A673 (cell line): ENCODE measurements at regions of chr5 and their contacts with region 1.

Region 1: DNA sequence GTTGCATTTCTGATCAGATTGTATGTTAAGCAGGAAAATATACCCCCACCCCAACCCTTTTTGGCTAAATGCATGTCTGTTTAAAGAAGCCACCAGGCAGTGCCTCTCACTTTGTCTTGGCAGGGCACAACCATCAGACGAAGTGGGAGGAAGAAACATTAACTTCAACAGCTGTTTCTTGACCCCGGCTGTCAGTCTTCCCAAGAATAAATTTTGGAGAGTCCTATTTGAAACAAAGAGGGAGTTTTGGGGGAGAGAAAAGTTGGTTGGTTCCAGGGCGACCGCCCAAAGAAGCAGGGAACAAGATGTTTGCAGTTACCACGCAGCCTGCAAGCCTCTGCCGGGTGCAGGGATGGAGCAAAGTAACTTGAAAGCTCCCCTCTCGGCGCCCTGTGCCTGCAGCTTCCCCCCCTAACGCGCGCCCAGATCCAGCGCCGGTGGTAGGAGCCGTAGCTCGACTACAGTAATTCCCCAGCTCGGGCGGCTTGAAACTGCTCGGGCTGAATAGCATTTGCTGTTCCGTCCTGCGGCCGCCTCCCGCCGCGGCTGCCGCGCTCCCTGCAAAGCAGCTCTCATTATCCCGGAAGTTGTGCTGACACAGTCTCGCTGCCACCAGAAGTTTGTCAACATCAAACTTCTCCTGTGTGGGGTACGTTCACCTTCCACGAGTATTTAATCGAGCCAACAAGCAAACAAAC is 100.7 kb upstream of the SSBP2 start:
- DNase-seq: peak; percentile 98
- H3K4me3 ChIP-seq: peak overlapping the region; percentile 37
- H3K27ac ChIP-seq: peak overlapping the region; percentile 98
- H3K4me1 ChIP-seq: peaks cover 71% of the 10 kb centered on the region
- H3K27me3 ChIP-seq: no peaks in the 10 kb centered on the region
- CTCF ChIP-seq: no peak

Region 2: GRCh38 chr5:81425569-81425968 is 426.1 kb before region 1 on chr5:
- CTCF ChIA-PET with region 1: no interaction called
- POLR2A ChIA-PET with region 1: no interaction called
- intact Hi-C with region 1: loop called (anchors 1 kb)
- DNase-seq: peak; percentile 76
- H3K4me3 ChIP-seq: no peak overlapping the region
- H3K27ac ChIP-seq: no peak overlapping the region
- H3K4me1 ChIP-seq: peaks cover 14% of the 10 kb centered on the region
- H3K27me3 ChIP-seq: no peaks in the 10 kb centered on the region
- CTCF ChIP-seq: peak; percentile 69

Region 3: DNA sequence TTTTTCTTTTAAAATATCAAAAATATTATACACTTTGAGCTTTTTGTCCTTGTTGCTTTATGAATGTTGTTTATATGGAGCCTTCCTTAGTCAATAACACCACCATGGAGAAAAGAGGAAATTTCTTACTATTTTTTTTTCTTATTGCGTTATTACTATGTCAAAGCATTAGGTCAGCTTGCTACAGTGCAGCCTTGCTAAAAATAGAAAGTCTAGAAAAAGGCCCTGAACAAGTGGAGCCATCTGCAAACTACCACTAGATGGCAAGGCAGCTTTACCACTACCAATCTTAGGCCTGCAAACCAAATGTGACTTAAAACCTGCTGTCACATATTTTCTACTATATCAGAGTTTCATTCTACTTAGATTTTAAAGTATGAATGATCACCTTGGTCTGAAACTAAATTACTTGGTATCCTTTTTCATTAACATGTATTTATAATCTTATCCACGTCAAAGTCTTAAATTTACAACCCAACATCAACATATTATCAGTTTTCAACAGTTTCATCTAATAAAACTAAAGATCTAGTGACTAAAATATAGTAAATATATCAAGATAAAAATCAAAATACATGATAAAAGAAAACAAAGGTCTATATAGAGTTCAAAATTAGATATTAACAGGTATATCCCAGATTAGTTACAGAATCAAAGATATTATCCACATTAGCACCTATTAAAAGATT is 344.6 kb before region 1 on chr5:
- CTCF ChIA-PET with region 1: no interaction called
- POLR2A ChIA-PET with region 1: no interaction called
- intact Hi-C with region 1: loop called (anchors 2 kb)
- DNase-seq: peak; percentile 89
- H3K4me3 ChIP-seq: no peak overlapping the region
- H3K27ac ChIP-seq: no peak overlapping the region
- H3K4me1 ChIP-seq: peaks cover 23% of the 10 kb centered on the region
- H3K27me3 ChIP-seq: no peaks in the 10 kb centered on the region
- CTCF ChIP-seq: peak; percentile 88

Region 4: DNA sequence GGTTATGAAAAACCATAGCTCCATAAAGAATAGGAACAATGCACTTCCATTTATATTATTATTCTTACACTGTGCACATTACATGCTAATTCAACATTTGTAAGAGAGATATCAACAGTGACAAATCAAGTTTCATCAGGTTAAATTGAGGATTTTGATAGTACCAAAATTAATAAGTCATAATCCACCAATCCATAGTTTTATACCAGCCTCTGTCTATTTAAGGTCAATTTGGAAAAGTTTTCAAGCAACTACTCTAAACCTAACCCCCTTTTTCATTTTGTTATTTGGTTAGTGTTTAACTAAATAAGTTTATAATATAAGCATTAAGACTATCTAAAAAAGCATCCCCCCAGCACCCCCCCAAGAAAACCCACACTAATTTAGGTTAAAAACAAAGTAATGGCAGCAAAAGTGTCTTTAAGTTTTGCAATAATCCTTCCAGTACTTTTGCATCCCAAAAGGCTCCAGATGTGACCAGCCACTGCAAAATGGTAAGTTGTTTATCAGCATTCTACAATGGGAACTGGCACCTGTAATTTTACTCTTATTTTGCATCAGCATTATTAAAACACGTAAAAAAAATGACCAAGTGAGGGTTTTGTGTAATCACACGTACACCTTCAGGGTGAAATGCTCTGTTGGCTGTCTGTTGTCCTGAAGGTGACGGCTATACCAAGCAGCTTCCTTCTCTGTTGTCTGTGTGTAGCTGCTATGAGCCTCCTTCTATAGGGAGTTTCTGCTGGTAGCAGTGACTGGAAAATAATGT is 64.0 kb before region 1 on chr5:
- CTCF ChIA-PET with region 1: interaction called, 5 read pairs
- POLR2A ChIA-PET with region 1: no interaction called
- intact Hi-C with region 1: loop called (anchors 1 kb)
- DNase-seq: peak; percentile 89
- H3K4me3 ChIP-seq: no peak overlapping the region
- H3K27ac ChIP-seq: peak overlapping the region; percentile 72
- H3K4me1 ChIP-seq: peaks cover 32% of the 10 kb centered on the region
- H3K27me3 ChIP-seq: no peaks in the 10 kb centered on the region
- CTCF ChIP-seq: no peak

Region 5: GRCh38 chr5:81971712-81972495 is 120.3 kb after region 1 on chr5 and contains the start of gene ATG10:
- CTCF ChIA-PET with region 1: no interaction called
- POLR2A ChIA-PET with region 1: no interaction called
- intact Hi-C with region 1: loop called (anchors 5 kb)
- DNase-seq: peak; percentile 96
- H3K4me3 ChIP-seq: peak within 1 kb of the TSS; percentile 81
- H3K27ac ChIP-seq: peak within 1 kb of the TSS; percentile 99
- H3K4me1 ChIP-seq: peaks cover 10% of the 10 kb centered on the region
- H3K27me3 ChIP-seq: no peaks in the 10 kb centered on the region
- CTCF ChIP-seq: no peak
- total RNA-seq, gene ATG10: 17.1 and 18.1 TPM in 2 replicates

Region 6: GRCh38 chr5:82205005-82205404 is 353.4 kb after region 1 on chr5:
- CTCF ChIA-PET with region 1: no interaction called
- POLR2A ChIA-PET with region 1: no interaction called
- intact Hi-C with region 1: no loop called
- DNase-seq: no peak
- H3K4me3 ChIP-seq: no peak overlapping the region
- H3K27ac ChIP-seq: no peak overlapping the region
- H3K4me1 ChIP-seq: no peaks in the 10 kb centered on the region
- H3K27me3 ChIP-seq: no peaks in the 10 kb centered on the region
- CTCF ChIP-seq: no peak